ENCODE measurements at regions of chr20 and their contacts with region 1.

Region 1: DNA sequence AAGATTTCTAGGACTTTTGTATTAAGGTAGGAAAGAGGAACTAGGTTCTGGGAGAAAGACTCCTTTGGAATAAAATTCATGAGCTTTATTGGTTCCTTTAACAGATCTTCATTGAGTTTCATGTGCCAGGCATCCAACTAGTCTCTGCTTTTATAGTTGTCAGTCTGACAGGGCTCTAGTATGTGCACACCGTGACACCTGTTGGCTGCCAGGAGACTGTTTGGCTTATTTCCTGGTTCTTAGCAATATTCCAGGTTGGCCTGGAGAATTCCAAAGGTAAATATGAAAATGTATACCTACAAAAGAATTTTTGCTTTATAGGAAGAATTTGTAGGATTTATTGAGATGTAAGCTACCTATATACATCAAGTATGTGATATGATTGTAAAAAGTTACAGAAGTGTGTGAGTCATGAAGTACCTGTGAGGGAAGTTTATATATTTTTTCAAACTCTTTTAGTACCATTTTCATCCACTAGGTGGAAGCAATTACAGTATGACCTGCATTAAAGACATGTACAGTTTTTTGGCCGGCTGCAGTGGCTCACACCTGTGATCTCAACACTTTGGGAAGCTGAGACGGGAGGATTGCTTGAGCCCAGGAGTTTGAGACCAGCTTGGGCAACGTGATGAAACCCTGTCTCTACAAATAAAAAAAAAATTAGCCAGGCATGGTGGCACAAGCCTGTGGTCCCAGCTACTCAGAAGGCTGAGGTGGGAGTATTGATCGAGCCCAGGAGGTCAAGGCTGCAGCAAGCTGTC is 35.2 kb downstream of the NDUFAF5 start:
- DNase-seq: peak; percentile 27 to 38 (median 31)
- H3K4me3 ChIP-seq: no peak overlapping the region
- H3K27ac ChIP-seq: no peak overlapping the region
- H3K4me1 ChIP-seq: peaks cover 4% of the 10 kb centered on the region
- H3K27me3 ChIP-seq: no peaks in the 10 kb centered on the region
- CTCF ChIP-seq: peak in 2 of 3 donors; percentile 38 to 59
- EP300 ChIP-seq: no peak
- POLR2A ChIP-seq: no peak

Region 2: DNA sequence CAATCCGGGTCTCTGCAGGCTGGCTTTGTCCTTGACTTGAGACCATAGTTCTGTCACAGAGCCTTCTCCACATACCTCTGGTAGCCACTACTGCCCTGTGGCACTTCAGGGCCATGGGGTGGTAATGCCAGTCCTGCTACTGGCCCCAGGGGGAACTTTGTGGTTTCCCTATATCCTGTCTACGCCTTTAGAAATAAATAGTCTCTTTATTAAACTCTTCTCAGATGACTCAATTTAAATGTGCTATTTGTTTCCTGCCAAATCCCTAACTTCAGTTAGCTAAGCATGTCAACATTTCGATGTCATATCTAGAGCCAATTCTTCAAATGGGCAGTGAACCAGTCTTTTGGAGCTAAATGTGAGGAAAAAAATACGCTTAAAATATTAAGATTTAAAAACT is 110.2 kb after region 1 on chr20:
- intact Hi-C with region 1: loop called in 1 of 4 experiments (anchors 10 kb)
- DNase-seq: no peak
- H3K4me3 ChIP-seq: no peak overlapping the region
- H3K27ac ChIP-seq: no peak overlapping the region
- H3K4me1 ChIP-seq: peaks cover 2% of the 10 kb centered on the region
- H3K27me3 ChIP-seq: no peaks in the 10 kb centered on the region
- CTCF ChIP-seq: no peak
- EP300 ChIP-seq: no peak
- POLR2A ChIP-seq: no peak

Region 3: GRCh38 chr20:14055127-14055742 is 235.2 kb after region 1 on chr20:
- intact Hi-C with region 1: loop called in 3 of 4 experiments (anchors 2 to 5 kb)
- DNase-seq: peak in 1 of 5 donors; percentile 19
- H3K4me3 ChIP-seq: no peak overlapping the region
- H3K27ac ChIP-seq: no peak overlapping the region
- H3K4me1 ChIP-seq: no peaks in the 10 kb centered on the region
- H3K27me3 ChIP-seq: no peaks in the 10 kb centered on the region
- CTCF ChIP-seq: peak in 2 of 3 donors; percentile 42 to 44
- EP300 ChIP-seq: no peak
- POLR2A ChIP-seq: no peak

Measured in ovary (tissue), 10 donors.